Natural killer cell (primary cell): ENCODE measurements at regions of chr13 and their contacts with region 1.

Region 1: DNA sequence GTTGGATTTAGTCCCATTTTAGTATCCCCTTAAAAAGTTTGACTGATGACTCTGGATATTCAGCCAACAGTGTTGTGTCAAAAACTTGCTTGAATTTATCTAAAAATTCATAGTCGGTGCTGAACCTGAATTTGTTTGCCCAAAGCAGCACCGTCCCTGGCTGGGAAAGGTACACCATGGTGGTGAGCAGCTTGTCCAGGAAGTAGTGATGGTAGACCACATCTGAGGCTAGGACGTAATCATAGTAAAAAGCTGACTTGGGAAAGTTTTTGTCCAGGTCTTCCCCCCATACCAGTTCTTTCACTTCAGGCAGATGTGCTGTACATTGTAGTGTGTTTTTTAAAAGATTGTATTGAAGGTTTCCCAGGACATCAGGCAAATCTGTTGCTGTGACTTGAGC is 8.8 kb downstream of the METTL21C start:
- DNase-seq: peak in 1 of 2 donors; percentile 30
- ATAC-seq: peak in 2 of 3 donors; percentile 26 to 78
- H3K4me3 ChIP-seq: no peak overlapping the region
- H3K4me3 Mint-ChIP-seq: no peak overlapping the region
- H3K27ac ChIP-seq: no peak overlapping the region
- H3K27ac Mint-ChIP-seq: peak overlapping the region in 1 of 2 donors; percentile 31
- H3K4me1 ChIP-seq: peaks cover 11% of the 10 kb centered on the region
- H3K4me1 Mint-ChIP-seq: peaks cover 25 to 39% of the 10 kb centered on the region in 2 donors
- H3K27me3 ChIP-seq: no peaks in the 10 kb centered on the region
- H3K27me3 Mint-ChIP-seq: peaks cover 5 to 7% of the 10 kb centered on the region in 2 donors
- CTCF ChIP-seq: no peak

Region 2: GRCh38 chr13:102724923-102725322 is 38.9 kb after region 1 on chr13:
- intact Hi-C with region 1: loop called (anchors 5 kb)
- DNase-seq: peak in 1 of 2 donors; percentile 40
- ATAC-seq: peak; percentile 56 to 59 (median 57)
- H3K4me3 ChIP-seq: no peak overlapping the region
- H3K4me3 Mint-ChIP-seq: no peak overlapping the region
- H3K27ac ChIP-seq: no peak overlapping the region
- H3K27ac Mint-ChIP-seq: no peak overlapping the region
- H3K4me1 ChIP-seq: peaks cover 9% of the 10 kb centered on the region
- H3K4me1 Mint-ChIP-seq: peaks cover 20 to 28% of the 10 kb centered on the region in 2 donors
- H3K27me3 ChIP-seq: no peaks in the 10 kb centered on the region
- H3K27me3 Mint-ChIP-seq: peaks cover 10 to 13% of the 10 kb centered on the region in 2 donors
- CTCF ChIP-seq: peak; percentile 12